Activated CD4-positive, alpha-beta T cell treated with anti-CD3 and anti-CD28 coated beads for 36 hours (primary cell): ENCODE measurements at regions of chr12 and their contacts with region 1.

Region 1: GRCh38 chr12:121015825-121016766 is at the start of gene C12orf43:
- DNase-seq: peak; percentile 97
- ATAC-seq: peak; percentile 99
- H3K4me3 Mint-ChIP-seq: peak within 1 kb of the TSS; percentile 91
- H3K27ac Mint-ChIP-seq: peak within 1 kb of the TSS; percentile 92
- H3K4me1 Mint-ChIP-seq: peaks cover 16% of the 10 kb centered on the region
- H3K27me3 Mint-ChIP-seq: no peaks in the 10 kb centered on the region
- total RNA-seq, gene C12orf43: 22.8 to 23.8 TPM

Region 2: DNA sequence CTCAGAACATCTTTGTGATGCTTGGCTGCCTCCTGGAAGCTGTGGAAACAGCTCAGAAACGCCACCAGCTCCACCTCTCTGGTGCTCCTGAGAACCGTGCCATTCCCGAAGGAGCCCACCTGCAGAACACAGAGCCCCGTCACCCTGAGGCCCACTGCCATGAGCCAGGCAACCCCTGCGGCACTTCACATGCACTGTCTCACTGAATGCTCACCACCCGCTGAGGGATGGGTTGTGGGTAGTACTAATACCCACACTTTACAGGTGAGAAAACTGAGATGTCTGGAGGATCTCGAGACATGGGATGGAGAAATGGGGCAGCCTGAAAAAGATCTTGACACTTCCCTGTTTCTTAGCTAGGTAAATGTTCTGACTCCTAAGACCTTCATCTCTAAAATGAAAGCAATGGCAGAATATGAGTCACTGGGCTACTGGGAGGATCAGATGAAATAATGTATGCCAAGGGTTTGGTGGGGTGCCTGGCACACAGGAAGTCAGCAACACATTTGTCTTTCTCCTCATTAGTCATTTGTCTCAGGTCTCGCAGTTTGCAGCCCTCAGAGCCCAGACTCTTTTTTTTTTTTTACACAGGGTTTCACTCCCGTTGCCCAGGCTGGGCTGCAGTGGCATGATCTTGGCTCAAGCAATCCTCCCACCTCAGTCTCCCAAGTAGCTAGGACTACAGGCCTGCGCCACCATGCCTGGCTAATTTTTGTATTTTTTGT is 17.7 kb after region 1 on chr12:
- CTCF ChIA-PET with region 1: interaction called, 3 read pairs
- POLR2A ChIA-PET with region 1: no interaction called
- intact Hi-C with region 1: loop called (anchors 1 kb)
- DNase-seq: peak; percentile 79
- ATAC-seq: peak; percentile 79
- H3K4me3 Mint-ChIP-seq: peak overlapping the region; percentile 46
- H3K27ac Mint-ChIP-seq: peak overlapping the region; percentile 87
- H3K4me1 Mint-ChIP-seq: peaks cover 59% of the 10 kb centered on the region
- H3K27me3 Mint-ChIP-seq: no peaks in the 10 kb centered on the region

Region 3: DNA sequence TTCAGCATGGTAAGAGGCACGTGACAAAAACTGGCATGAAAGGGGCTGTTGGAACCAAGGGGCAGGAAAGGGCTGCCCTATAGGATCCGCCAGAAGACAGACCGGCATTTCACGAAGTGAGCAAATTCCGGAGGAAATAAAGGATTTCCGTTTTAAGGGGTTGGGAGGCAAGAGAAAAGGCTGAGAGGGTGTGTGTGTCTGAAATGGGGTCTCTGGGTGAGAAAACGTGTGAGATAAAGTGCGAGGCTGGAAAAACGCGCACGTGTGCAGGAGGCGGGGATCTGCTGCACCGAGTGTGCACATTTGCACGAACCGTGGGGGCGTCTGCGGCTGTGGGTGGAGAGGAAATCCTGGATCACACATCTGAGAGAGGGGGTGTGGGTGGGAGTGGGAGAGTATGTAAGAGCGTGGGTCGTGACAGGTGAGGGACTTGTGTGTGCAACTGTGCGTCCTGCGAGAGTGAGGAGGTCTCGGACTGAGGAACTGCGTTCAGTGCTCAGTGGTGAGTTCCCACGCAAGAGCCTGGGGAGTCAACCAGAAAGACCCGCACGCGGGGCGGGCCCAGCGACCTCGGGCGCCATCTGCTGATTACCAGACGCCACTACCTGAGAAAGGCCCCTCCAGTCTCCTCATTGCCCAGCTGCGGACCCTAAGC is 79.6 kb after region 1 on chr12:
- CTCF ChIA-PET with region 1: interaction called, 3 read pairs
- POLR2A ChIA-PET with region 1: interaction called, 12 read pairs
- intact Hi-C with region 1: loop called (anchors 1 to 5 kb)
- DNase-seq: peak; percentile 88
- ATAC-seq: peak; percentile 88
- H3K4me3 Mint-ChIP-seq: peak overlapping the region; percentile 65
- H3K27ac Mint-ChIP-seq: peak overlapping the region; percentile 56
- H3K4me1 Mint-ChIP-seq: peaks cover 43% of the 10 kb centered on the region
- H3K27me3 Mint-ChIP-seq: peaks cover 5% of the 10 kb centered on the region

Region 4: GRCh38 chr12:121209624-121210572 is 193.8 kb after region 1 on chr12 and contains the start of gene P2RX4:
- CTCF ChIA-PET with region 1: no interaction called
- POLR2A ChIA-PET with region 1: no interaction called
- intact Hi-C with region 1: loop called in 1 of 2 experiments (anchors 5 kb)
- DNase-seq: peak; percentile 93
- ATAC-seq: peak; percentile 79
- H3K4me3 Mint-ChIP-seq: peak within 1 kb of the TSS; percentile 79
- H3K27ac Mint-ChIP-seq: peak within 1 kb of the TSS; percentile 89
- H3K4me1 Mint-ChIP-seq: peaks cover 31% of the 10 kb centered on the region
- H3K27me3 Mint-ChIP-seq: no peaks in the 10 kb centered on the region
- total RNA-seq, gene P2RX4: 21.2 to 21.6 TPM

Region 5: DNA sequence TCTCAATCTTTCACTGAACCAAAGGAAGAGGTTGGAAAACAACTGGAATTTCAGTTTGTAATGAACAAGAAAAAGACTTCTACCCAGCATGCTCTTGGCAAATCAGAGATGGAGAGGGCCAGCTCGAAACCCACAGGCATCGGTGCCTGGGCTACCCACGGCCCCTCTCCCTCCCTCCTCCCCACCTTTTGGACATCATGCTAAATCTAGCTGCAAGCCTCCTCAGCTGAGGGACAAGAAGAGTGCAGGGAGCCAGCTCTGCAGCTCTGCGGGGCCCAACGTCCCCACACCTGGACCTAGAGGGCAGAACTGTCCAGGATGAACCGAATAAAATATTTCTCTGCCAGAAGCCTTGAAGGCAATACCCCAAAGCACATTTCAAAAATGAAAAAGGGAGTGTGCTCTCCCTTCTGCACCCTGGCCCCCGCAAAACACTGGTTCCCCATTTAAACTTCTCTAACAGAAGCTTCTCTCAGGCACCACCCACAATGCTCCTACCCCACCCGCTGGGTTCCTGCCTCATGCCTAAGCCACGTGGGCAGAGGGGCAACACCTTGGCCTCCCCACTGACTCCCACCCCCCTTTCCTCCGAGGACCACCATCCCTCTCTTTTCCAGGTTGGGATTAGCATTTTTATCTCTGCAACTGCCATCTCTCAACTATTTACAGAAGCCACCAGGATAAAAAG is 272.2 kb after region 1 on chr12:
- CTCF ChIA-PET with region 1: no interaction called
- POLR2A ChIA-PET with region 1: no interaction called
- intact Hi-C with region 1: no loop called
- DNase-seq: no peak
- ATAC-seq: no peak
- H3K4me3 Mint-ChIP-seq: no peak overlapping the region
- H3K27ac Mint-ChIP-seq: peak overlapping the region; percentile 37
- H3K4me1 Mint-ChIP-seq: peaks cover 14% of the 10 kb centered on the region
- H3K27me3 Mint-ChIP-seq: no peaks in the 10 kb centered on the region